ENCODE measurements at regions of chr5 and their contacts with region 1.

Region 1: DNA sequence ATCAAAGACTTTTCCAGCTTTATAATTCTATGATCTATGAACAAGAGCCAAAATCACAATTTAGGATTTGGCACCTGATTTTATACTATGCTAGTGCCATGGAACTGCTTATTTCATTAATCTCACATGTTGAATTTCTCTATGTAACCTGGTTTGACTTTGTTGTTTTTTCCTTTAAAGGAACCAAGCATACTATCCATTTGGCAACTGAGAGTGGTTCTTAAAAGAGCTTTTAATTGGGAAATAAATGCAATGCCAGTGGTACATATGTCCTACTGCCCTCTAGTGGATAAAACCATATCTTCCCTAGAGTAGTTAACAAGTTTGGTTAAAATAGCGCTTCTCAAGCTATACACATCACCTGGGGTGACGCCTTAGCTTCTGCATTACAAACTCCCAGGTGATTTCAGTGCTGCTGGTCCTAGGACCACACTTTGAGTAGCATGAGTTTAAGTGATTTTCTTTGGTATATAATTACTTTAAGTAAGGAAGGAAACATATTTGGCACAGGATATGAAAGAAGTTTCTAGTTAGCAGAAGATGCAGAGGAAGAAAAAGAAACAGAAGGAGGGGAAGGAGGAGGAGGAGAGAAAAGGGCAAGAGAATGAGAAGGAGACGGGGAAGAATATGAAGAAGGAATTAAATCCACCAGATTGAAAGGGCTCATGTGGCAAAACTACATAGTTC is 56.8 kb downstream of the FGF10 start:
- DNase-seq: no peak
- H3K4me3 Mint-ChIP-seq: no peak overlapping the region
- H3K27ac Mint-ChIP-seq: no peak overlapping the region
- H3K4me1 Mint-ChIP-seq: no peaks in the 10 kb centered on the region
- H3K27me3 Mint-ChIP-seq: no peaks in the 10 kb centered on the region

Region 2: DNA sequence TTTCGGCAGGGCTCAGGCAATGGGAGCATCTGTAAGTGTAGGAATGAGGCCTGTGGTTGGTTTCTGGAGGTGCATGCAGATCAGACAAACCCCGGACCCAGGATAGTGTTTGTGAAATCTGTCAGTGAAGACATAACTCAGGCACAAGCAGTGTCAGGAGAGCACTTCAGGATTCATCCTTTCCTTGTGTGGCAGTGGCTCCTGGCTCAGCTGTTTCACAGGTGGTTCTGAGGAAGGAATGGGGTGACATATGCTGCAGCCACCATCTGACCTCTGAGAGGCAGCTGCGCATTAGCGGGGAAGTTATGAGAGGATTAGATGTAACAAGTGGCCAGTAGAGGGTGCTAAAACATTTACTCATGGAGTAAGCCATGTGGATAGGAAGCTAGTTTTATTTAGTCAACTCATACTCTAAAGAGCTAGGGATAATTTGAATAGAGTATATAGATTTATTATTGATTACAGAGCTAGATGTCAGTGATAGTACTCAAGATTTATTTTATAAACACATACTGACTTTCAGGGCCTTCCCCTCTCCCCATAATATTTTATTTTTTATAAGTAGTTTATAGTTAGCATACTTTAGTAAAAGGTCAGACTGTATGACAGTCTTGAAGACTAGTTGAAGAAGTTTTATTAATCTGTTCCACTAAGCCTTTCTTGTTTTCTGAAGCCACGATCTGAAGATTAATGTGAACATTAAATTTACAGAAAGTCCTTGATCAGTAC is 701.1 kb before region 1 on chr5:
- intact Hi-C with region 1: loop called (anchors 5 kb)
- DNase-seq: no peak
- H3K4me3 Mint-ChIP-seq: no peak overlapping the region
- H3K27ac Mint-ChIP-seq: no peak overlapping the region
- H3K4me1 Mint-ChIP-seq: peaks cover 7% of the 10 kb centered on the region
- H3K27me3 Mint-ChIP-seq: no peaks in the 10 kb centered on the region

Region 3: DNA sequence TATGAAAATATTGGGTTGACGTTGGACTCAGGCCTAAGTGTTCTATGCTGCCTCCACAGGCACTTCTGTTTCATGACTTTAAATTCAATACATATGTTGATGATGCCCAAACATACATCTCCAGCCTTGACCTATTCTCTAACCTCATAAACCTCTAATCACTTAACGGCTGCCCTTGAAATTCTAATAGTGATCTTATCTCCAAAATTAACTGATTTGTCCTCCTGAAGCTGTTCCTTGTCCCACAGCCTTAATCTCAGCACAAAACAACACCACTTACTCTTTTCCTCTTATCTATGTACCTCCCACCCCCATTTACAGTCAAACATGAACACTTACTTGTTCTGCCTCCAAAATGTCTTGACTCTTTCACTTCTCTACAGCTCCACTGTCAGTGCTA is 13.4 kb after region 1 on chr5:
- intact Hi-C with region 1: no loop called
- DNase-seq: no peak
- H3K4me3 Mint-ChIP-seq: no peak overlapping the region
- H3K27ac Mint-ChIP-seq: no peak overlapping the region
- H3K4me1 Mint-ChIP-seq: no peaks in the 10 kb centered on the region
- H3K27me3 Mint-ChIP-seq: no peaks in the 10 kb centered on the region

Region 4: DNA sequence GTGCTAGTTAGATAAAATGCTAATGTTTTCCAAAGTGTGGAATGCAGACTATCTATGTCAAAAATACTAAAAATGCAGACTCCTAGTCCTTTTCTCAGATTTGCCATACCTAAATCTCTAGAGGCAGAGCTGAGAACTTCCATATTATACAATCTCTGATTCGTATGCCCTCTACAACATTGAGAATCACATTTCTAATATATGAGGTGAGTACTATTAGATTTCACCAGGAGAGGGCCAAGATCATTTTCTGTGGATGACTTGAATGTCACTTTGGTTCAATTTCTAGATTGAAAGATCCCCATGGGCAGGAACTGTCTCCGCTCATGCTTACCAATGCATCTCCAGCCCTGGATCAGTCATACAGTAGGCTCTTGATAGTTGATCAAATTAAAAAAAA is 183.1 kb after region 1 on chr5:
- intact Hi-C with region 1: no loop called
- DNase-seq: no peak
- H3K4me3 Mint-ChIP-seq: no peak overlapping the region
- H3K27ac Mint-ChIP-seq: no peak overlapping the region
- H3K4me1 Mint-ChIP-seq: no peaks in the 10 kb centered on the region
- H3K27me3 Mint-ChIP-seq: no peaks in the 10 kb centered on the region

Measured in activated T-helper 2 cell treated with anti-CD3 and anti-CD28 coated beads, Interferon-gamma antibody, Interleukin-2, Interleukin-4, amounts not matched to agents 10 μg/mL and 5 μg/mL and 100 μg/mL, durations not matched to agents 14 hours and 24 hours and 36 hours (primary cell).